Activated CD8-positive, alpha-beta T cell treated with anti-CD3 and anti-CD28 coated beads, Interleukin-2, amount 10 ng/mL, durations not matched to agents 7 days and 5 days (primary cell): ENCODE measurements at regions of chr11 and their contacts with region 1.

Region 1: GRCh38 chr11:77082838-77083562 is 16.2 kb downstream of the CAPN5 start:
- DNase-seq: peak; percentile 82
- ATAC-seq: peak; percentile 95
- H3K4me3 Mint-ChIP-seq: peak overlapping the region; percentile 71
- H3K27ac Mint-ChIP-seq: peak overlapping the region; percentile 95
- H3K4me1 Mint-ChIP-seq: peaks cover 32% of the 10 kb centered on the region
- H3K27me3 Mint-ChIP-seq: peaks cover 7% of the 10 kb centered on the region

Region 2: DNA sequence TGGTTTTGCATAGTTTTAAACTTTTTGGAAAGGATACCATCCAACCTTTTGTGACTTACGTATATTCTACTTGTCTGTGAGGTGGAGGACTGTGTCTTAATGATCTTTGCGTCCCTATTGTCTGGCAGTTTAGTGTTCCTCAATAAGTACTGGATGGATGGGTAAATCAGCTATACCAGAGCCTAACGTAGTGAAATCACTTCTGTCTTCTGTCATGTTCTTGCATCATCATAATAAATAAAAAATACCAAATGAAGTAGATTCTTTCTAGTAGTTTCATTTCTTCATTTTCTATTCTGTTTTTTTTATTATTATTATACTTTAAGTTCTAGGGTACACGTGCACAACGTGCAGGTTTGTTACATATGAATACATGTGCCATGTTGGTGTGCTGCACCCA is 155.8 kb before region 1 on chr11:
- CTCF ChIA-PET with region 1: no interaction called
- POLR2A ChIA-PET with region 1: no interaction called
- DNase-seq: no peak
- ATAC-seq: no peak
- H3K4me3 Mint-ChIP-seq: no peak overlapping the region
- H3K27ac Mint-ChIP-seq: no peak overlapping the region
- H3K4me1 Mint-ChIP-seq: no peaks in the 10 kb centered on the region
- H3K27me3 Mint-ChIP-seq: no peaks in the 10 kb centered on the region

Region 3: DNA sequence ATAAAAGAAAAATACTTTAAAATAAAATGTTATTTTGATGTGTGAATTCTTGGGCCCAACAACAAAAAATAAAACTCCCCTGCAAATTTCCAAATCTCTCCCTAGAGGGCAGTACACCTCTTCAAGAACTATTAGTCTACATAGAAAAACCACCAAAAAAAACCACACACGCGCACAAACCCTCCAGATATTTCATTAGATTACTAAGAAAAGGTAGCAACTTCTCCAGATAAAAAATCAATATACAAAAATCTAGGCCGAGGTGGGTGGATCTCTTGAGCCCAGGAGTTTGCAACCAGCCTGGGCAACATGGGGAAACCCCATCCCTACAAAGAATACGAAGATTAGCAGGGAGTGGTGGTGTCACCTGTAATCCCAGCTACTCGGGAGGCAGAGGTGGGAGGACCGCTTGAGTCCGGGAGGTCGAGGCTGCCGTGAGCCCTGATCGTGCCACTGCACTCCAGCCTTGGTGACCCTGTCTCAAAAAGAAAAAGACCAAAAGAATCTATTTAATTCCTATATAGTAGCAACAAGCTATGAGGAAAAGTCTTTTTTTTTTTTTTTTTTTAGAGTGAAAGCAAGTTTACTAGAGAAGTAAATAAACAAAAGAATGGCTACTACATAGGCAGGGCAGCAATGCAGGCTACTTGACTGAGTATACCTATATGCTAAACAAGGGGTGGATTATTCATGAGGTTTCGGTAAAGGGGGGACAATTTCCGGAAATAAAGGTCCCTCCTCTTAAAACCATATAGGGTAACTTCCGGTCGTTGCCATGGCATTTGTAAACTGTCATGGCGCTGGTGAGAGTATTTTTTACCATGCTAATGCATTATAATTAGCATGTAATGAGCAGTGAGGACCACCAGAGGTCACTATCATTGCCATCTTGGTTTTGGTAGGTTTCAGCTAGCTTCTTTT is 35.7 kb before region 1 on chr11:
- CTCF ChIA-PET with region 1: interaction called, 19 read pairs
- POLR2A ChIA-PET with region 1: no interaction called
- DNase-seq: peak; percentile 91
- ATAC-seq: peak; percentile 89
- H3K4me3 Mint-ChIP-seq: peak overlapping the region; percentile 37
- H3K27ac Mint-ChIP-seq: peak overlapping the region; percentile 1
- H3K4me1 Mint-ChIP-seq: peaks cover 15% of the 10 kb centered on the region
- H3K27me3 Mint-ChIP-seq: peaks cover 21% of the 10 kb centered on the region